ENCODE measurements at regions of chr21 and their contacts with region 1.

Region 1: GRCh38 chr21:28745131-28746016 is 247.3 kb downstream of the LTN1 start:
- DNase-seq: peak; percentile 29
- ATAC-seq: peak; percentile 88
- H3K4me3 Mint-ChIP-seq: no peak overlapping the region
- H3K27ac Mint-ChIP-seq: no peak overlapping the region
- H3K4me1 Mint-ChIP-seq: no peaks in the 10 kb centered on the region
- H3K27me3 Mint-ChIP-seq: no peaks in the 10 kb centered on the region
- CTCF ChIP-seq: no peak

Region 2: GRCh38 chr21:26850108-26850643 is 1895.2 kb before region 1 on chr21:
- CTCF ChIA-PET with region 1: interaction called, 30 read pairs
- POLR2A ChIA-PET with region 1: no interaction called
- intact Hi-C with region 1: loop called (anchors 1 kb)
- DNase-seq: no peak
- ATAC-seq: no peak
- H3K4me3 Mint-ChIP-seq: no peak overlapping the region
- H3K27ac Mint-ChIP-seq: no peak overlapping the region
- H3K4me1 Mint-ChIP-seq: peaks cover 19% of the 10 kb centered on the region
- H3K27me3 Mint-ChIP-seq: peaks cover 34% of the 10 kb centered on the region
- CTCF ChIP-seq: no peak

Region 3: DNA sequence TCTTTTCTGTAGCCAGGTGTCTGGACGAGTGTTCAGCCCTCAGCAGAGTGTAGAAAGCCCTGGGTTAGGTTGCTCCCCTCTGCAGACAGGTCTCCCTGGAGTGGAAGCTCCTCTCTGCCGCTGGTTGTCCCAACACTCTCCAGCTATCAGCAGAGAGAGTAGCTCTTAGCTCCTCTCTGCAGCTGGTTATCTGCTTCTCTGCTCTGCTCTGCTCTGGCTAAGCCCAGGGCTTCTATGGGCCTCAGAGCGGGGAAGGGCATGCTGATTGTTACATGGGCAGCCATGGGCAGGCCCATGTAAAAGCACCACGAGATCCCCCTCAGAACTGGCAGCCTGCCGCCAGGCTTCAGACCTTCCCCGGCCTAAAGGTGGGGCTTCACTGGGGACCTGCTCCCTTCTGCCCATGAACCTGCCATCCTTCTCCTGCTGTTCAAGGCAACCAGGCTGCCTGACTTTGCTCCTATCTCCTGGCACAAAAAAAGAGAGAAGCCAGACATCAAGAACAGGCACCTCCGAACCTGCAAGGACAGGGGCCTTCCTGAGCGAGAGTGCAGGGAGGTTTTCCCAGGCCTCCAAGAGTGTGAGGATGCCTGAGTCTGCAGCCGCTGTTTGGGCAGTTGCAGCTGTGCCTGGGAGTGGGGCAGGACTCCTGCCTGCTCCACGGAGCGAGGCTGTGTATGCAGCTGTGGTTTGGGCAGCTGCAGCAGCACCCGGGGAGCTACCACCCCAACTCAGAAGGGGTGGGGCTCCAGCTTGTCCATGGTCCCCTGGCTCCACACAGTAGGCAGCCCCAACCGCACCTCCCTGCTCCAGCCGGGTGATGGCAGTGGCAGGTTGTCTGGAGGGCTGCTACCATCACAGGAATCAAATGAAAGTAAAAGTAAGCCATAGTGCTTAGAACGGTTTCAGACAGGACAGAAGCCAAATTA is 726.4 kb before region 1 on chr21:
- CTCF ChIA-PET with region 1: no interaction called
- POLR2A ChIA-PET with region 1: no interaction called
- intact Hi-C with region 1: no loop called
- DNase-seq: no peak
- ATAC-seq: no peak
- H3K4me3 Mint-ChIP-seq: no peak overlapping the region
- H3K27ac Mint-ChIP-seq: no peak overlapping the region
- H3K4me1 Mint-ChIP-seq: no peaks in the 10 kb centered on the region
- H3K27me3 Mint-ChIP-seq: no peaks in the 10 kb centered on the region
- CTCF ChIP-seq: no peak

Region 4: GRCh38 chr21:28069450-28069923 is 675.9 kb before region 1 on chr21:
- CTCF ChIA-PET with region 1: no interaction called
- POLR2A ChIA-PET with region 1: no interaction called
- intact Hi-C with region 1: loop called (anchors 10 kb)
- DNase-seq: no peak
- ATAC-seq: no peak
- H3K4me3 Mint-ChIP-seq: no peak overlapping the region
- H3K27ac Mint-ChIP-seq: no peak overlapping the region
- H3K4me1 Mint-ChIP-seq: peaks cover 19% of the 10 kb centered on the region
- H3K27me3 Mint-ChIP-seq: no peaks in the 10 kb centered on the region
- CTCF ChIP-seq: no peak

Region 5: DNA sequence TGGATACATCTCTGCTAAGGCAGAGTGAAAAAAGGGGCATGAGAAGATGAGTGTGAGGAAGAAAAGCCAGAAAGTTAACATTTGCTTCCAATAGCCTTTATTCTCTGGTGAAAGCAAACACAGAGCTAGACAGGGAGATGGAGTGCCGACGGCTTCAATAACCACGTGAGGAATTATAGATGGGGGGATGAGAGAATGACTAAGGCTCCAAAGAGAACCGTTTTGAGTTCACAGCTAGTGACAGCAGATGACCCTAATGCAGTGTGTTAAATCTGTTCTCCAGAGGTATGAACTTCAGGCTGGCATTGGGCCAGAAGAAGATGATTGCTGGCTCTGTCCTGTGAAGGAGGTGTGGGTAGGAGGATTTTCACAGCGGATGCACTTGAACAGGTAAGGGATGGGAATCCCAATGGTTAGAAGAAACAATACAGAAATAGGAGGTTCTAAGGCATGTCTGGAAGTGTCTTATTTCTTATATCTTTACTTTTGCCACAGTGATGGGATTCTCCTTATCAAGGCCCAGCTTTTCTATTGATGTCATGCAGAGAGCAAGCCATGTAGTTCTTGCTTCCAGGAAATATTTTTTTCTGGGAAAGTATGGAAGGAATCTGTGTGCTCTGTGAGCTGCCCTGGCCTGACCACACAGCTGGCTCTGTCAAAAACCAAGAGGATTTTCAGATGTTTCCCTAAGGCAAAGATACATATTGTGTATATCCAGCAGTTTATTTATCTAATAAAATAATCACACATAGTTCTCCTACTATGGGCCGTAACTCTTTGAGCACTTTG is 326.5 kb before region 1 on chr21:
- CTCF ChIA-PET with region 1: no interaction called
- POLR2A ChIA-PET with region 1: no interaction called
- intact Hi-C with region 1: no loop called
- DNase-seq: no peak
- ATAC-seq: no peak
- H3K4me3 Mint-ChIP-seq: no peak overlapping the region
- H3K27ac Mint-ChIP-seq: no peak overlapping the region
- H3K4me1 Mint-ChIP-seq: no peaks in the 10 kb centered on the region
- H3K27me3 Mint-ChIP-seq: no peaks in the 10 kb centered on the region
- CTCF ChIP-seq: no peak

Region 6: GRCh38 chr21:28516991-28517592 is 228.3 kb before region 1 on chr21:
- CTCF ChIA-PET with region 1: interaction called, 193 read pairs
- POLR2A ChIA-PET with region 1: no interaction called
- intact Hi-C with region 1: loop called (anchors 1 kb)
- DNase-seq: peak; percentile 25
- ATAC-seq: peak; percentile 95
- H3K4me3 Mint-ChIP-seq: no peak overlapping the region
- H3K27ac Mint-ChIP-seq: no peak overlapping the region
- H3K4me1 Mint-ChIP-seq: peaks cover 8% of the 10 kb centered on the region
- H3K27me3 Mint-ChIP-seq: peaks cover 2% of the 10 kb centered on the region
- CTCF ChIP-seq: no peak

Region 7: GRCh38 chr21:28675331-28676041 is 69.9 kb before region 1 on chr21:
- CTCF ChIA-PET with region 1: no interaction called
- POLR2A ChIA-PET with region 1: no interaction called
- intact Hi-C with region 1: no loop called
- DNase-seq: no peak
- ATAC-seq: no peak
- H3K4me3 Mint-ChIP-seq: no peak overlapping the region
- H3K27ac Mint-ChIP-seq: no peak overlapping the region
- H3K4me1 Mint-ChIP-seq: peaks cover 3% of the 10 kb centered on the region
- H3K27me3 Mint-ChIP-seq: no peaks in the 10 kb centered on the region
- CTCF ChIP-seq: no peak

Region 8: DNA sequence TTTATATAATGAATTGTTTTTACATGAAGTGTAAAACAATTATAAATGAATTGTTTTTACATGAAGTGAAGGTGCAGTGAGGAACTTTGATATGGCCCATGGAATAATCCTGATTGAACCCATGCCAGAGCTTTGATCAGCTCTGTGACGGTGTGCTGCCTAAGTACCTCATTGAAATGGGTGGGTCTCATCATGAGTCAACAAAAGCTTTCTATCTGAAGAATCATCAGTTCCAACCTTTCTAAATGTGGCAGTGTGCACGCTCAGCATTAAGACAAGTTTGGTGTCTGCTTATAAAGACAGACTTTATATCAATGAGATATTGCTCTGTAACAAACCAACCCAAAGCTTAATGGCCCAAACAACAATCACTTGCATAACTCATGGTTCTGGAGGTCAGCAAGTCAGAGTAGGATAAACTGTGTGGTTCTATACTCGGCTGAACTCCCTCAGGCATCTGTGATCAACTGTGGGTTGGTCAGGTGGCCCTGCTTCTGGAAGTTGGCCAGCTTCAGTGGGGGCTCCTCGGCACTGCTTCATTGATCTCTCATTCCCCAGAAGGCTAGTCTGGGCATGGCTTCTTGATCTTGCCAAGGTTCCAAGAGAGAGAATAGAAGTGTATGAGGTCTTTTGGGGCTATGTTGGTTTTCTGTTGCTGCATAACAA is 10.7 kb before region 1 on chr21:
- CTCF ChIA-PET with region 1: interaction called, 22 read pairs
- POLR2A ChIA-PET with region 1: interaction called, 3 read pairs
- intact Hi-C with region 1: no loop called
- DNase-seq: no peak
- ATAC-seq: no peak
- H3K4me3 Mint-ChIP-seq: no peak overlapping the region
- H3K27ac Mint-ChIP-seq: no peak overlapping the region
- H3K4me1 Mint-ChIP-seq: no peaks in the 10 kb centered on the region
- H3K27me3 Mint-ChIP-seq: no peaks in the 10 kb centered on the region
- CTCF ChIP-seq: no peak

Region 9: DNA sequence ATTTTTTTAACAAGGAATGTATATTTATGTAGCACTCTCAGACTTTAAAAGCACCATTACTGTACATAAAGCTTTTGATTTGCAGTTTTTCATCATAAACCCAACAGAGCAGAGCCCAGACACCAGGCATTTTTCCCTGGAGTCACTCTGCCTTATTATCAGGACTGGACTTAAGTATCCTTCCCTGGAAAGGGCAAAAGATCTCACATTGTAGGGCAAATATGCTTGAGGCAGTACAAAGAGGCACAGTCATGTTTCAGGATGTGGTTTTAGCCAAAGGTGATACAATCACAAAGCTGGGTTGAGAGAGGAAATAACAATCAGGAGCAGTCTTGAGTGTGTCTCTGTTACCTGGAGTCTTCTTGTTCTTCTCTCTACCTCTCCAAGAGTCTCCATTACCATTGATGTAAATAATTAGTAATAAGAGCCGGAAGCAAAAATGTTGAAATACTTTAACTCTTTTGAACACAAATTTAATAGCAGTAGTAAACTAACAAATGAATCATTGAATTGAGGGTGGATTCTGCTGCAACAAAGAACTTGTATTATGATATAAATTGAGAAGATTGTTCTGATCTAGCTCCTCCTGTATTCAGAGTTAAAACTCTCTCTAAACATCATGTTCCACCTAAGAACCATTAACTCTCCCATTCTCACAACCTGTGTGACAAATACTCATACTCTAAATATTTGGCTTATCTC is 86.8 kb after region 1 on chr21:
- CTCF ChIA-PET with region 1: no interaction called
- POLR2A ChIA-PET with region 1: no interaction called
- intact Hi-C with region 1: no loop called
- DNase-seq: no peak
- ATAC-seq: no peak
- H3K4me3 Mint-ChIP-seq: no peak overlapping the region
- H3K27ac Mint-ChIP-seq: no peak overlapping the region
- H3K4me1 Mint-ChIP-seq: peaks cover 2% of the 10 kb centered on the region
- H3K27me3 Mint-ChIP-seq: no peaks in the 10 kb centered on the region
- CTCF ChIP-seq: no peak

Measured in activated B cell treated with CpG ODN at 0.5 μM for 24 hours (primary cell).